ENCODE measurements at regions of chr2 and their contacts with region 1.

Region 1: DNA sequence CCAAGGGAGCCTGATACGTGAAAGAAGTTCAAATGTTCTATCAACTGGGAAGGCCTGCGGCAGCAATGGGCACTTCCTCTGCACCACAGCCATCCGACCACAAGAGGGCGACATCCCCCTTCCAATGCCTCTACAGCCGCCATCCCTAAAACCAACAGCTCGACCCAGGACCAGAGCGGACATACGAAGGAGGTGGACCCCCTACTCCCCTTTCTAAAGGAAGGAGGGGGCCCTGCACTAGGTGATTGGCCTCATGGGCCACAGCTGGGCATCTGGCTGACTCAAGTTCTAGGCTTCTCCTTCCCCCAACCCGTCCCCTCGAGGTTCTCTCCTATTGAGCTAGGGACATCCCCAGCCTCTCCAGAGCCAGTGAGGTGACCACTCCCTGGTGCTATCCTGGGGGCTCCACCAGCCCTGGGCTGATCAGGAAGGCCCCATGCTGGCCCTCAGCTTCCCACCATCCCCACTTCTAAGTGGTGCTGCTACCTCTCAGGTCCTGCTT is 217.2 kb downstream of the TNS1 start:
- DNase-seq: no peak
- H3K4me3 ChIP-seq: no peak overlapping the region
- CTCF ChIP-seq: peak; percentile 92

Region 2: DNA sequence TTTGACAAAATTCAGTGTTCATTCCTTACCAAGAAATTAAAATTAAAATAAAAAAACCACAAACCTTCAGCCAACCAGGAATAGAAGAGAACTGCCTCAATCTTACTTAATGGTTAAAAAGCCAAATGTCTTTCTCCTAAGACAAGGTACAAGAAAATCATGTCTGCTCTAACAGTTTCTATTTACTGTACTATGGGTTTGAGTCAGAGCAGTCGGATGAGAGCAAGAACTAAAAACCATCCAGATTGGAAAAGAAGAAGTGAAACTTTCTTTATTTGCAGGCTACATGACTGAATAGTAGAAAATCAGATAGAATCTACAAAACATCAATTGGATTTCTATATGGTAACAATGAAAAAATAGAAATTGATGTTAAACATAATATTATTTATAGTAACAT is 370.3 kb before region 1 on chr2:
- CTCF ChIA-PET with region 1: no interaction called
- POLR2A ChIA-PET with region 1: no interaction called
- DNase-seq: no peak
- H3K4me3 ChIP-seq: no peak overlapping the region
- CTCF ChIP-seq: no peak

Region 3: DNA sequence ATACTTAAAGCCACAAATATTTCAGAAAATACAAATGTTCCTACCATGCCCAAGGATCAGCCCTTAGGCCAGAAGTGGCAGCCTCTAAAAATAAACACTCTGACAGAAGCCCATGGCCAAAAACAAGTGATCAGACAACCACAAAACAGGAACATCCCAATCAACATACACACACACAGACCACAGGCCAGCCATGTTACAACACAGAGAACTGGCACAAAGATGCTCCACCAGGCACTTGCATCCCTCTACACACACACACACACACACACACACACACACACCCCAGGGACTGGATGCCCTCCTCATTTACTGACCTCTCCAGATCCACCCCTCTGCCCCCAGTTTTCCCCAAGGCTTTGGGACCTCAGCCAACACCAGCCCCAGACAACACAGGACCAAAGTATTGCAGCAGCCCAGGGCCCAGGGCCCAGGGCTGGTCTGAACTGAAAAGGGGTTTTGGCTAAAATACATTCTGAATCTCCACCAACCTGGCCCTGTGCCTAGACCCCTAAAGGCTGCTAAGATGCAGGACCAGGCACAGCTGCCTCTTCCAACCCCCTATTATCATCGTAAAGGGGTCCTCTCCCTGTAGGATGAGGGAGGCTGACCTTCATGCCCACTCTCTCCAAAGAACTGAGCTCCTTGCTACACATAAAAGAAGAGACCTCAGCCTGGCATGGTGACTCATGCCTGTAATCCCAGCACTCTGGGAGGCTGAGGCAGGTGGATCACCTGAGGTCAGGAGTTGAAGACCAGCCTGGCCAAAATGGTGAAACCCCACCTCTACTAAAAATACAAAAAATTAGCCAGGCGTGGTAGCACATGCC is 65.8 kb after region 1 on chr2:
- CTCF ChIA-PET with region 1: interaction called, 11 read pairs
- POLR2A ChIA-PET with region 1: no interaction called
- DNase-seq: no peak
- H3K4me3 ChIP-seq: no peak overlapping the region
- CTCF ChIP-seq: no peak

Region 4: DNA sequence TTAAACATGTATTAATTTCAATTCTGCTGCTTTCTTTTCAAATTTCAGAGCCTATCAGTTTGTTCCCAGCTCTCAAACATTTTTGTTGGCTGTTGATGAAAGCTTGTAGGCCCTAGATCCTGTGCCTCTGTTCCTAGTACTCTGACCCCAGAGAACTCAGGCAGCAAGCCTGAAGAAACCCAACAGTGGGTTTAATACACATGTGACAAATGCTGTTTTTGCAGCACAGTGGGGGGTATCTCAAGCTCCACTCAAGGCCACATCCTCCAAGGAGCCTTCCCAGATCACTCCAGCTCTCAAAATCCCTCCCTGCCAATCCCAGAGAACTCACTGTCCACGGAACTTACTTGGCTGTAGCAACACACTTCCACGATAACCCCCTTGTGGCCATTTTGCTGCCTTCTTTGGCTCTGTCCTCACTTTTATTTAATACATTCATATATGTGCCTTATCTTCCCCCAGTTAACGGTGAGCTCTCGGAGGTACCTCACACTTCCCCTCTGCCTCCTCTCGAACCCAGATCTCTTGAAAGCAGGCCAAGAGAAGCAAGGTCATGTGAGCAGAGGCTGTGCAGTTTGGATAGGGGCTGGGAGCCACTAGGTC is 94.8 kb after region 1 on chr2:
- CTCF ChIA-PET with region 1: interaction called, 122 read pairs
- POLR2A ChIA-PET with region 1: no interaction called
- DNase-seq: no peak
- H3K4me3 ChIP-seq: no peak overlapping the region
- CTCF ChIP-seq: no peak

Region 5: GRCh38 chr2:217993817-217994463 is 208.3 kb after region 1 on chr2:
- CTCF ChIA-PET with region 1: interaction called, 79 read pairs
- POLR2A ChIA-PET with region 1: no interaction called
- DNase-seq: no peak
- H3K4me3 ChIP-seq: no peak overlapping the region
- CTCF ChIP-seq: peak; percentile 89

Region 6: GRCh38 chr2:218039171-218039570 is 253.6 kb after region 1 on chr2:
- CTCF ChIA-PET with region 1: interaction called, 101 read pairs
- POLR2A ChIA-PET with region 1: no interaction called
- DNase-seq: no peak
- H3K4me3 ChIP-seq: no peak overlapping the region
- CTCF ChIP-seq: no peak

Region 7: DNA sequence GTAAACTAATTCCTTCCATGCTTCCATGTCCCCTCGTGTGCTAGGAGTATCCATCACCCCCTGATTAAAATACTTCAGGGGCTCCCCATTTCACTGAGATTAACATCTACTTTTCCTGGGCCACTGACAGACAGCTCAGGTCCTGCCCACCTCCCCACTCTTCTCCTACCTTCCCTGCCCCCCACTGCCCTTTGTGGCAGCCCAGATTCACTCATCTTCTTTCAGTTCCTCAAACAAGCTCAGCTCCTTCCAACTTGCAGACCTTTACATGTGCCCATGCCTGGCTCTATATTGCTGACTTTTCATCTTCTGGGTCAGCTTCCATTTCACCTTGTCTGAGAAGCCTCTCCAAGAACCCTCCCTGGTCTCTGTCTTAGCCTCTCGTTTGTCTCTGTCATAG is 295.5 kb after region 1 on chr2:
- CTCF ChIA-PET with region 1: interaction called, 12 read pairs
- POLR2A ChIA-PET with region 1: no interaction called
- DNase-seq: no peak
- H3K4me3 ChIP-seq: no peak overlapping the region
- CTCF ChIP-seq: no peak